Activated T-helper 1 cell treated with anti-CD3 and anti-CD28 coated beads, Interleukin-12 subunit alpha, Interleukin-12 subunit beta, Interleukin-2, Interleukin-4 antibody, amounts not matched to agents 30 ng/mL and 10 ng/mL and 1 ng/mL, durations not matched to agents 14 hours and 24 hours and 36 hours (primary cell): ENCODE measurements at regions of chr1 and their contacts with region 1.

Region 1: DNA sequence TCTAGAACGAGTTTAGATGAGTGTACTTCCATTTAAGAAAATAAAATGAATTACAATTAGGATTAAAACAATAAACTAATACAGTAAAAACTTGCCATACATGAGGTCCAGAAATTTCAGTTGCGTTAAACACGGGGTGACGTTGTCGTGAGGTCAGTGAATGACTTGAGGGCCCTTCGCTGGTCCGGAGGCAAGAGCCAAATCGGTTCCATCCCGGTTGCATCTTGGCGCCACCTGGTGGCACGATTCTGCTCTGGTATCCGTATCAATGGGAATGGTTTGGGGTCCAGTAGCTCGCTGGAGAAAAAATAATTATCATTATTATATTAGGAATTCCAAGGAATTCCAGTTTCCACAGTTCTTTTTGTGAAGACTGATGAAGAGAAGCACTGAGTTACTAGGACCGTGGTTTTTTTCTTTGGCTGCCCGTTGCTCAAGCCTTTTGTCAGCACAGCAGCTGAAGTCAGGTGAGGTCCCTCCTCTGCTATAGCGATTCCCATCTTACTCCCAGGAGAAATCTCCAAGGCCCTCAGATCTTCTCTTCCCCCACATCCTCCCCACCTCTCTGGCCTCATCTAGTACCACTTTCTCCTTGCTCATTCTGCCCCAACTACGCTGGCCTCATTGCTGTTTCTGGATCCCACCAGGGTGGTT is 161.4 kb downstream of the SLC35F3 start:
- DNase-seq: peak; percentile 40
- H3K4me3 Mint-ChIP-seq: no peak overlapping the region
- H3K27ac Mint-ChIP-seq: no peak overlapping the region
- H3K4me1 Mint-ChIP-seq: no peaks in the 10 kb centered on the region
- H3K27me3 Mint-ChIP-seq: peaks cover 6% of the 10 kb centered on the region

Region 2: GRCh38 chr1:233394860-233395717 is 670.8 kb before region 1 on chr1:
- intact Hi-C with region 1: loop called (anchors 1 kb)
- DNase-seq: peak; percentile 17
- H3K4me3 Mint-ChIP-seq: no peak overlapping the region
- H3K27ac Mint-ChIP-seq: no peak overlapping the region
- H3K4me1 Mint-ChIP-seq: no peaks in the 10 kb centered on the region
- H3K27me3 Mint-ChIP-seq: peaks cover 8% of the 10 kb centered on the region

Region 3: GRCh38 chr1:233928123-233928522 is 137.8 kb before region 1 on chr1:
- intact Hi-C with region 1: no loop called
- DNase-seq: no peak
- H3K4me3 Mint-ChIP-seq: no peak overlapping the region
- H3K27ac Mint-ChIP-seq: no peak overlapping the region
- H3K4me1 Mint-ChIP-seq: no peaks in the 10 kb centered on the region
- H3K27me3 Mint-ChIP-seq: no peaks in the 10 kb centered on the region

Region 4: GRCh38 chr1:234139966-234140365 is 74.0 kb after region 1 on chr1:
- intact Hi-C with region 1: loop called (anchors 10 kb)
- DNase-seq: no peak
- H3K4me3 Mint-ChIP-seq: no peak overlapping the region
- H3K27ac Mint-ChIP-seq: no peak overlapping the region
- H3K4me1 Mint-ChIP-seq: no peaks in the 10 kb centered on the region
- H3K27me3 Mint-ChIP-seq: peaks cover 14% of the 10 kb centered on the region